ENCODE measurements at regions of chr15 and their contacts with region 1.

Region 1: DNA sequence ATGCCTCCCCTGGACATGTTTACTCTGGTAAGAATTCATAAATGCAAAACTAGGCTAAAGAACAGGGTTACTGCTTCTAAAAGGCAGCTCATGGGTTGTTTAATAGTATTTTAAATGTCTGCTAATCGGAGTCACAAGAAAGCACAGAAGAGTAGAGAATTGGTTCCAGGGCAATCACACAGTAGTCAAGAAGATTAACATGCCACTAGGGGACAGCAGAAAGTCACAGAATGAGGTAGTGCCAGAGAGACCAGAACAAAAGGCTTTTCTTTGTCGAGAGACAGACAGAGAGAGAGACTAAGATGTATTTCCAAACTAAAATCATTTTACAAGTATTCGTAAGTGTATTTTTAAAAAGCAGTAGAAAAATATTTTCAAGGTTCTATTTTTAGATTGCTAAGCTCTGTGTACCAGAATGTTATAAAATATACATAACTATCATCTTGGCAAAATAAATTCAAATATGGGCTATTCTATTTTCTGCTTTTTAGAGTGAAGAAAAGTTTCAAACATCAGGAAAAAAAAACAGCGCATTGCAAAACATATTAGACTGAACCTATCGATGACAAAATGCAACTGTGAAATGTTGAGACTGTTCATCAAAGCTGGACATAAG is 78.3 kb upstream of the CDIN1 start:
- DNase-seq: peak in 2 of 4 donors; percentile 37 to 74
- ATAC-seq: peak; percentile 82
- H3K4me3 ChIP-seq: no peak overlapping the region
- H3K27ac ChIP-seq: no peak overlapping the region
- H3K4me1 ChIP-seq: no peaks in the 10 kb centered on the region
- H3K27me3 ChIP-seq: no peaks in the 10 kb centered on the region
- CTCF ChIP-seq: peak; percentile 28 to 56

Region 2: DNA sequence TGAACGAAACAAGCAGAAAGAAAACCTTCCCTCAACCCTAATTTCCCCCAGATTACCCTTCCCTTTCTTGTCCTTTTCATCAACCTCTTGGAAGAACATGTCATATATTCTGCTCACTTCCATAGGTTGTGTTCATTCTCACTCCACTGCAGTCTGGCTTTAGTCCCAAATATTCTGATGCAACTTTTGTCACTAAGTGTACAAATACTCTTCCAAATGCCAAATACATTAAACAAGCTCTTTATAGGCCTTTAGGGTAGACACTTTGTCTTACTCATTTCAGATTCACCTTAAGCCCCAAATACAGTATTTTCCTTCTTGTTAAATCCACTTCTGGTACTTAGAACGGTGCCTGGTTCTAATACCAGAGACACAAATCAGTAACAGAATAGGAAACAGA is 328.2 kb before region 1 on chr15:
- intact Hi-C with region 1: no loop called
- DNase-seq: no peak
- ATAC-seq: no peak
- H3K4me3 ChIP-seq: no peak overlapping the region
- H3K27ac ChIP-seq: no peak overlapping the region
- H3K4me1 ChIP-seq: peaks cover 3 to 7% of the 10 kb centered on the region in 2 donors
- H3K27me3 ChIP-seq: no peaks in the 10 kb centered on the region
- CTCF ChIP-seq: no peak

Region 3: GRCh38 chr15:37134699-37135131 is 633.5 kb after region 1 on chr15:
- intact Hi-C with region 1: loop called in 1 of 2 experiments (anchors 10 kb)
- DNase-seq: peak in 1 of 4 donors; percentile 29
- ATAC-seq: peak; percentile 87
- H3K4me3 ChIP-seq: no peak overlapping the region
- H3K27ac ChIP-seq: no peak overlapping the region
- H3K4me1 ChIP-seq: no peaks in the 10 kb centered on the region
- H3K27me3 ChIP-seq: peaks cover 9 to 27% of the 10 kb centered on the region in 2 donors
- CTCF ChIP-seq: peak; percentile 52 to 61